CD4-positive, alpha-beta memory T cell (primary cell): ENCODE measurements at regions of chr20 and their contacts with region 1.

Region 1: GRCh38 chr20:39049684-39050554 is 87.8 kb downstream of the DHX35 start:
- DNase-seq: peak; percentile 67 to 83 (median 76)
- H3K4me3 ChIP-seq: peak overlapping the region; percentile 73 to 74
- H3K4me3 Mint-ChIP-seq: peak overlapping the region; percentile 83 to 93 (median 88)
- H3K27ac ChIP-seq: peak overlapping the region; percentile 45
- H3K27ac Mint-ChIP-seq: peak overlapping the region in 6 of 7 donors; percentile 30 to 93 (median 89)
- H3K4me1 ChIP-seq: peaks cover 11% of the 10 kb centered on the region
- H3K4me1 Mint-ChIP-seq: peaks cover 6 to 12% (median 9%) of the 10 kb centered on the region in 4 donors
- H3K27me3 ChIP-seq: no peaks in the 10 kb centered on the region
- H3K27me3 Mint-ChIP-seq: peaks cover 0 to 6% of the 10 kb centered on the region in 2 donors

Region 2: GRCh38 chr20:38730989-38731737 is 318.8 kb before region 1 on chr20:
- CTCF ChIA-PET with region 1: interaction called, 10 read pairs
- POLR2A ChIA-PET with region 1: no interaction called
- intact Hi-C with region 1: no loop called
- DNase-seq: peak; percentile 66 to 74 (median 71)
- H3K4me3 ChIP-seq: peak overlapping the region; percentile 44 to 75
- H3K4me3 Mint-ChIP-seq: peak overlapping the region; percentile 61 to 85 (median 73)
- H3K27ac ChIP-seq: no peak overlapping the region
- H3K27ac Mint-ChIP-seq: peak overlapping the region in 5 of 7 donors; percentile 11 to 94 (median 68)
- H3K4me1 ChIP-seq: peaks cover 46% of the 10 kb centered on the region
- H3K4me1 Mint-ChIP-seq: peaks cover 33 to 52% (median 44%) of the 10 kb centered on the region in 4 donors
- H3K27me3 ChIP-seq: peaks cover 74% of the 10 kb centered on the region
- H3K27me3 Mint-ChIP-seq: peaks cover 67 to 85% of the 10 kb centered on the region in 2 donors

Region 3: GRCh38 chr20:38962044-38962927 is 87.6 kb before region 1 on chr20 and contains the start of gene DHX35:
- CTCF ChIA-PET with region 1: interaction called, 27 read pairs
- POLR2A ChIA-PET with region 1: interaction called, 3 read pairs
- intact Hi-C with region 1: no loop called
- DNase-seq: peak; percentile 98 to 99 (median 98)
- H3K4me3 ChIP-seq: peak within 1 kb of the TSS; percentile 86 to 98
- H3K4me3 Mint-ChIP-seq: peak within 1 kb of the TSS; percentile 88 to 98 (median 96)
- H3K27ac ChIP-seq: peak within 1 kb of the TSS; percentile 76
- H3K27ac Mint-ChIP-seq: peak within 1 kb of the TSS; percentile 90 to 98 (median 96)
- H3K4me1 ChIP-seq: peaks cover 24% of the 10 kb centered on the region
- H3K4me1 Mint-ChIP-seq: peaks cover 12 to 31% (median 25%) of the 10 kb centered on the region in 4 donors
- H3K27me3 ChIP-seq: no peaks in the 10 kb centered on the region
- H3K27me3 Mint-ChIP-seq: no peaks in the 10 kb centered on the region
- total RNA-seq, gene DHX35: 11.5 to 11.8 TPM

Region 4: DNA sequence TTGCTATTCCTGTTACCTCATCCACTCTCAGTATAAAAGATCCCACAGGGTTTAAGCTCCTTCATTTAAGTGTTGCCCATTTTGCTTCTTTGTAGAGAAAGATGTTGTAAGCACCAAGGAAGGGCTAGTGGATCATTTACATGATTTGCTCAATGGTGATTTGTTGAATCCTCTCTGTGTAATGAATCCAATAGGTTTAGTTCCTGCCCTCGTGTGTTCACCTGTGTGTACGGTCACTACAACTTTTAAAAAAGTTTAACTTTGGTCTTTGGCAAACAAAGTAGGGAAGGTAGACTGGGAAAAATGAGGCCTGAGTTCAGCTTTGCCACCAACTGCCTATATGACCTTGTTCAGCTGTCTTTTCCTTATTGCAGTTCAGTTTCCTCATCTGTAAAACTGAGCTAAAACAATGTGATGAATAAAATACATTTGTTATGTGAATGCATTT is 36.2 kb before region 1 on chr20:
- CTCF ChIA-PET with region 1: interaction called, 17 read pairs
- POLR2A ChIA-PET with region 1: no interaction called
- intact Hi-C with region 1: no loop called
- DNase-seq: no peak
- H3K4me3 ChIP-seq: no peak overlapping the region
- H3K4me3 Mint-ChIP-seq: no peak overlapping the region
- H3K27ac ChIP-seq: no peak overlapping the region
- H3K27ac Mint-ChIP-seq: no peak overlapping the region
- H3K4me1 ChIP-seq: peaks cover 10% of the 10 kb centered on the region
- H3K4me1 Mint-ChIP-seq: peaks cover 10 to 14% (median 13%) of the 10 kb centered on the region in 4 donors
- H3K27me3 ChIP-seq: no peaks in the 10 kb centered on the region
- H3K27me3 Mint-ChIP-seq: no peaks in the 10 kb centered on the region

Region 5: GRCh38 chr20:39081255-39081654 is 31.3 kb after region 1 on chr20:
- CTCF ChIA-PET with region 1: interaction called, 348 read pairs
- POLR2A ChIA-PET with region 1: interaction called, 15 read pairs
- intact Hi-C with region 1: loop called (anchors 1 kb)
- DNase-seq: peak; percentile 66 to 75 (median 69)
- H3K4me3 ChIP-seq: no peak overlapping the region
- H3K4me3 Mint-ChIP-seq: no peak overlapping the region
- H3K27ac ChIP-seq: no peak overlapping the region
- H3K27ac Mint-ChIP-seq: no peak overlapping the region
- H3K4me1 ChIP-seq: no peaks in the 10 kb centered on the region
- H3K4me1 Mint-ChIP-seq: peaks cover 0 to 2% (median 0%) of the 10 kb centered on the region in 4 donors
- H3K27me3 ChIP-seq: no peaks in the 10 kb centered on the region
- H3K27me3 Mint-ChIP-seq: peaks cover 18 to 25% of the 10 kb centered on the region in 2 donors

Region 6: GRCh38 chr20:39326050-39326449 is 276.1 kb after region 1 on chr20:
- CTCF ChIA-PET with region 1: no interaction called
- POLR2A ChIA-PET with region 1: no interaction called
- intact Hi-C with region 1: no loop called
- DNase-seq: no peak
- H3K4me3 ChIP-seq: no peak overlapping the region
- H3K4me3 Mint-ChIP-seq: no peak overlapping the region
- H3K27ac ChIP-seq: no peak overlapping the region
- H3K27ac Mint-ChIP-seq: no peak overlapping the region
- H3K4me1 ChIP-seq: no peaks in the 10 kb centered on the region
- H3K4me1 Mint-ChIP-seq: no peaks in the 10 kb centered on the region
- H3K27me3 ChIP-seq: no peaks in the 10 kb centered on the region
- H3K27me3 Mint-ChIP-seq: peaks cover 4 to 9% of the 10 kb centered on the region in 2 donors